ENCODE measurements at regions of chr1 and their contacts with region 1.

Region 1: DNA sequence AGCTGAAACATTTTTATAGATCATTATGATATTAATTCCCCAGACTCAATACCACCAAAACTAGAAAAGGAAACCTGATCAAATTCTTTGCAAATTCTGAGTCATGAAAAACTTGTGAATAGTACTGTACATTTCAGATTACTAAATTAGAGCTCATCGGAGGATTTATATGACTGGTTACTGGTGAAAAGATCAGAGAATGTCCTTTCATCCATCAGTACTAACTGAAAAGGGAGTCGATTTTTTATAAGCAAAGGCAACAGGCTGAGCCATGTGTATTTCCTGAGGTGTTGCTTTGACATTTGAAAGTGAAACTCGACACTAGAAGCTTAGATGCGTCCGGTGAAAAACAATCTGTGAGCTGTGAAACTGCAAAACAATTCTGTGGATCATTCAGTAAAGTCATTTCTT is 155.7 kb downstream of the TNFSF18 start:
- DNase-seq: peak; percentile 29
- H3K4me3 Mint-ChIP-seq: peak overlapping the region; percentile 54
- H3K27ac Mint-ChIP-seq: peak overlapping the region; percentile 14
- H3K4me1 Mint-ChIP-seq: peaks cover 38% of the 10 kb centered on the region
- H3K27me3 Mint-ChIP-seq: peaks cover 18% of the 10 kb centered on the region

Region 2: DNA sequence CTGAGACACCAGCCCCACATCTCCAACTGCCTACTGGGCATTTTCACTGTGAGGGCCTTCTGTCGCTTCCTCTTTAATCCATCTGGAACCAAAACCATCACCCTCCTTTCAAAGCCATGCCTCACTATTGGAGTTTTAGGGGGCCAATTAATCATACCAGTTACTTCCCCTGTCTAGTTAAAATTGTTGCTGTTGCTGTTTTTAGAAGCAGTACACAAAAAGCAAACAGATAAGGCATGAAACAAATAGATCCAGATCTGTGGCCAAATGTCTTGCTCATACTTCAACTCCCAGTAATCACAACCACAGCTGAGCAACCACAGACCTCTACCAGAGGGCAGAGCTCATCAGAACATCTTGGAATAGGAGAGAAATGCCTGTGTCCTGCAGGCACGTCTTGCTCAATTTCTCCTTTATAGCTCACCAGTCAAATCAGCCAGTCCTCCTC is 608.4 kb before region 1 on chr1:
- CTCF ChIA-PET with region 1: no interaction called
- POLR2A ChIA-PET with region 1: no interaction called
- intact Hi-C with region 1: no loop called
- DNase-seq: no peak
- H3K4me3 Mint-ChIP-seq: no peak overlapping the region
- H3K27ac Mint-ChIP-seq: no peak overlapping the region
- H3K4me1 Mint-ChIP-seq: no peaks in the 10 kb centered on the region
- H3K27me3 Mint-ChIP-seq: no peaks in the 10 kb centered on the region

Region 3: GRCh38 chr1:172343240-172344160 is 551.6 kb before region 1 on chr1:
- CTCF ChIA-PET with region 1: no interaction called
- POLR2A ChIA-PET with region 1: no interaction called
- intact Hi-C with region 1: no loop called
- DNase-seq: no peak
- H3K4me3 Mint-ChIP-seq: no peak overlapping the region
- H3K27ac Mint-ChIP-seq: peak overlapping the region; percentile 21
- H3K4me1 Mint-ChIP-seq: peaks cover 47% of the 10 kb centered on the region
- H3K27me3 Mint-ChIP-seq: no peaks in the 10 kb centered on the region

Region 4: GRCh38 chr1:172778456-172779455 is 116.3 kb before region 1 on chr1:
- CTCF ChIA-PET with region 1: interaction called, 12 read pairs
- POLR2A ChIA-PET with region 1: interaction called, 6 read pairs
- intact Hi-C with region 1: no loop called
- DNase-seq: no peak
- H3K4me3 Mint-ChIP-seq: no peak overlapping the region
- H3K27ac Mint-ChIP-seq: no peak overlapping the region
- H3K4me1 Mint-ChIP-seq: peaks cover 13% of the 10 kb centered on the region
- H3K27me3 Mint-ChIP-seq: peaks cover 6% of the 10 kb centered on the region

Region 5: GRCh38 chr1:172826096-172826743 is 68.8 kb before region 1 on chr1:
- CTCF ChIA-PET with region 1: interaction called, 14 read pairs
- POLR2A ChIA-PET with region 1: no interaction called
- intact Hi-C with region 1: no loop called
- DNase-seq: no peak
- H3K4me3 Mint-ChIP-seq: no peak overlapping the region
- H3K27ac Mint-ChIP-seq: no peak overlapping the region
- H3K4me1 Mint-ChIP-seq: no peaks in the 10 kb centered on the region
- H3K27me3 Mint-ChIP-seq: peaks cover 6% of the 10 kb centered on the region

Region 6: GRCh38 chr1:172870901-172871606 is 24.0 kb before region 1 on chr1:
- CTCF ChIA-PET with region 1: no interaction called
- POLR2A ChIA-PET with region 1: no interaction called
- intact Hi-C with region 1: loop called (anchors 1 kb)
- DNase-seq: no peak
- H3K4me3 Mint-ChIP-seq: no peak overlapping the region
- H3K27ac Mint-ChIP-seq: no peak overlapping the region
- H3K4me1 Mint-ChIP-seq: peaks cover 37% of the 10 kb centered on the region
- H3K27me3 Mint-ChIP-seq: peaks cover 13% of the 10 kb centered on the region

Region 7: DNA sequence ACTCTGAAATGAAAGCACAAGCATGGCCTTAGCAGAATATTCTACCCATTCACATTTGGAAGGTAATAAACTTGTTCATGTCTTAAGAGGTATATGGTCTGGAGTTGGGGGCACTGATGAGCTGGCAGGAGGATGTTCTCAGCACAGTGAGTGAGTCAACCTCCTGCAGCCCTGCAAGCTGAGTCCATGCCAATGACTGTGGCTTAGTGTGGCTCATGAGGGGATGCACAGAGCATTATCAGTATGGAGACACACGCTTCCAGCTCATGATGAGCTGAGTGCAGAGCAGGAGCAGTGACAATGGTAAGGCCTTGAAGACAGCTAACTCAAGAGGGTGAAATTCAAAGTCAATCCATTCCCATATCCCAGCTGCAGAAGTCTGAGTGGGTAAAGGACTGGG is 53.4 kb after region 1 on chr1:
- CTCF ChIA-PET with region 1: no interaction called
- POLR2A ChIA-PET with region 1: no interaction called
- intact Hi-C with region 1: no loop called
- DNase-seq: peak; percentile 41
- H3K4me3 Mint-ChIP-seq: no peak overlapping the region
- H3K27ac Mint-ChIP-seq: no peak overlapping the region
- H3K4me1 Mint-ChIP-seq: peaks cover 23% of the 10 kb centered on the region
- H3K27me3 Mint-ChIP-seq: no peaks in the 10 kb centered on the region

Region 8: DNA sequence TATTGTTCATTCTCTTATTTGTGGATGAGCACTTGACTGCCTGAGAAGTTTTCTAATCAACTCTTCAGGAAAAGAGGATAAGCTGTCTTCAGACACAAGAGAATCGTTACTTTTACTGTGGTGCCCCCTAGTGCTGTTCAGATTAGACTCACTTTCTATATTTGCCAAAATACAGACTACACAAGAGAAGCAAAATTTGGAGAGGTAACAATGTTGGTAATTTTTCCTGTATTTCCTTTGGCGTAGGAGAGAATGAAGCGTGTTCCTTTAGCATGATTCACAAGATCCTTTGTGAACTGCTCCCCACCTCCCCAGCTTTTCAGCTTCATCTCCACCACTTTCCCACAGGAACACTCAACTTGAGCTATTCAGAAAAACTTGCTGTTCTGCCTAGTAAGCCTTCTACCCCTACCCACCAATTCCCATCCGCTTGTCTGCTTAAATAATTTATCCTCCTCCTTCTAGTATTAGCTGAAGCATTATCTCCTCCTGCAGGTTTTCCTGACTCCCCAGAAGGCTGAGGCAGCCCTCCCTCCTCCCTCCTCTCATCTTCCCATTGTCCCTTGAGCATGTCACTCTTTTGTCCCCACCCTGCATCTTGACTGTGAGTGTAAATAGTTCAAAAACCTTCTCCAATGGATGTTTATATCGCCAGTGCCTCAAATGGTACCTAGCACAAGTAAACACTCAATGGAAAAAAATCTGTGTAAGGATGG is 307.5 kb after region 1 on chr1:
- CTCF ChIA-PET with region 1: interaction called, 8 read pairs
- POLR2A ChIA-PET with region 1: no interaction called
- intact Hi-C with region 1: loop called (anchors 2 kb)
- DNase-seq: no peak
- H3K4me3 Mint-ChIP-seq: no peak overlapping the region
- H3K27ac Mint-ChIP-seq: no peak overlapping the region
- H3K4me1 Mint-ChIP-seq: peaks cover 32% of the 10 kb centered on the region
- H3K27me3 Mint-ChIP-seq: peaks cover 3% of the 10 kb centered on the region

Region 9: GRCh38 chr1:173330149-173330951 is 435.3 kb after region 1 on chr1:
- CTCF ChIA-PET with region 1: no interaction called
- POLR2A ChIA-PET with region 1: no interaction called
- intact Hi-C with region 1: loop called (anchors 10 kb)
- DNase-seq: no peak
- H3K4me3 Mint-ChIP-seq: no peak overlapping the region
- H3K27ac Mint-ChIP-seq: no peak overlapping the region
- H3K4me1 Mint-ChIP-seq: peaks cover 20% of the 10 kb centered on the region
- H3K27me3 Mint-ChIP-seq: no peaks in the 10 kb centered on the region

Region 10: GRCh38 chr1:173601588-173601987 is 706.5 kb after region 1 on chr1:
- CTCF ChIA-PET with region 1: no interaction called
- POLR2A ChIA-PET with region 1: no interaction called
- intact Hi-C with region 1: no loop called
- DNase-seq: no peak
- H3K4me3 Mint-ChIP-seq: no peak overlapping the region
- H3K27ac Mint-ChIP-seq: no peak overlapping the region
- H3K4me1 Mint-ChIP-seq: peaks cover 5% of the 10 kb centered on the region
- H3K27me3 Mint-ChIP-seq: peaks cover 2% of the 10 kb centered on the region

Measured in activated CD4-positive, alpha-beta memory T cell treated with anti-CD3 and anti-CD28 coated beads for 36 hours (primary cell).